SK-N-SH (cell line): ENCODE measurements at regions of chr17 and their contacts with region 1.

Region 1: DNA sequence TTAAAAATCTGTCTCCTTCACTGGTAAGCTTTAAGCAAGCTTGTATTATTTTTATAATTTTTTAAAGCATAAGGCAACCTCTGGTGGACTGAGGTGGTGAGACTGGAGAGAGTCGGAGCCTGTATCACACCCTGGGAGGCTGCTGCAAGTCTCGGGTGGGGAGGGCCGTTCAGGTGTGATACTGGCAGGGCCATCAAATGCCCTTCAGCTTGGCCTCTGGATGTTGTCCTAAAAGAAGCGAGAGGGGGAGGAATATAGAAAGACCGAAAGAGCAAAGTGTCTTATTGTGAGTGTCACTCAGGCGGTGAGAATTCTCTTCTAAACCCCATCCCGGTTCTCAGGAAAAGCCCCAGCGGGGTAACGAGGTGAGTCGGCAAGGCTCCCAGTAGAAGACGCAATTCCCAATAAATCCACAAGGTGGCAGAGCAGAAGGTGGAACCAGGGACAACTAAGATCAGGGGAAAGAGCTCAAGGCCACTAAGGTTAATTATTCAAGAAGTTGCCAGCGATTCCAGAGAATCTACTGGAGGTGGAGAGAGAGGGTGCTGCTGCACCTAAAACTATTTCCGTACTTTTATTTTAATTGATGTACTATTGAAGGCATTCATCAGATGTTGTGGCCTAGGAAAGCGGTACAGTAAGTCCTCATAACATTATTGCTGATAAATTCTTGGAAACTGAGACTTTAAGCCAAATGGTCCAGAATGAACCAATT is 14.1 kb downstream of the C17orf67 start:
- DNase-seq: peak; percentile 87
- H3K4me3 ChIP-seq: no peak overlapping the region; a peak in 1 of 4 replicates
- H3K27ac ChIP-seq: no peak overlapping the region
- H3K4me1 ChIP-seq: peaks cover 5 to 6% of the 10 kb centered on the region in 2 experiments; a peak in 2 of 4 replicates
- H3K27me3 ChIP-seq: no peaks in the 10 kb centered on the region
- CTCF ChIP-seq: peak; percentile 95
- EP300 ChIP-seq: no peak
- RAD21 ChIP-seq: peak; percentile 88

Region 2: DNA sequence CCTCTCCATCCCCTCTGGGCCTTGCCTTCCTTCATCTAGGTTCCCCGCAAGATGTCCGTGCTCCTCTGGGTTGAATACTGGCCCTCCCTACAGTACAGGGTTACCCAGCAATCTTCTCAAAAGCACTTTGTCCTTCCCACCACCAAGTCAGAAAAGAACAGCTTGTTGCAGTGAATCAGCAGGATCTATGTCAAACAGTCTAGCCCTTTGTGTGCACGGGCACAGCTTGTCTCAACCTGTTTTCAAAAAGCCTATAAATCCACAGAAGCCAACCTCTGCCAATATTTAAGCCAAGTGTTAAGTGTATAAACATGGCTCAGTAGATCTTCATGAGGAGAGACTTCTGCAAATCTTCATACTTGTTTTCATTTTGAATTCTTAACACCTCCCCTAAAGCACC is 11.1 kb before region 1 on chr17:
- CTCF ChIA-PET with region 1: interaction called, 35 read pairs
- POLR2A ChIA-PET with region 1: no interaction called
- DNase-seq: no peak
- H3K4me3 ChIP-seq: no peak overlapping the region
- H3K27ac ChIP-seq: no peak overlapping the region
- H3K4me1 ChIP-seq: peaks cover 0 to 2% of the 10 kb centered on the region in 2 experiments; a peak in 1 of 4 replicates
- H3K27me3 ChIP-seq: no peaks in the 10 kb centered on the region
- CTCF ChIP-seq: no peak
- EP300 ChIP-seq: no peak
- RAD21 ChIP-seq: no peak

Region 3: GRCh38 chr17:56860551-56860950 is 41.0 kb after region 1 on chr17:
- CTCF ChIA-PET with region 1: interaction called, 15 read pairs
- POLR2A ChIA-PET with region 1: no interaction called
- DNase-seq: no peak
- H3K4me3 ChIP-seq: no peak overlapping the region
- H3K27ac ChIP-seq: no peak overlapping the region
- H3K4me1 ChIP-seq: no peaks in the 10 kb centered on the region; a peak in 1 of 4 replicates
- H3K27me3 ChIP-seq: no peaks in the 10 kb centered on the region
- CTCF ChIP-seq: no peak
- EP300 ChIP-seq: no peak
- RAD21 ChIP-seq: no peak

Region 4: DNA sequence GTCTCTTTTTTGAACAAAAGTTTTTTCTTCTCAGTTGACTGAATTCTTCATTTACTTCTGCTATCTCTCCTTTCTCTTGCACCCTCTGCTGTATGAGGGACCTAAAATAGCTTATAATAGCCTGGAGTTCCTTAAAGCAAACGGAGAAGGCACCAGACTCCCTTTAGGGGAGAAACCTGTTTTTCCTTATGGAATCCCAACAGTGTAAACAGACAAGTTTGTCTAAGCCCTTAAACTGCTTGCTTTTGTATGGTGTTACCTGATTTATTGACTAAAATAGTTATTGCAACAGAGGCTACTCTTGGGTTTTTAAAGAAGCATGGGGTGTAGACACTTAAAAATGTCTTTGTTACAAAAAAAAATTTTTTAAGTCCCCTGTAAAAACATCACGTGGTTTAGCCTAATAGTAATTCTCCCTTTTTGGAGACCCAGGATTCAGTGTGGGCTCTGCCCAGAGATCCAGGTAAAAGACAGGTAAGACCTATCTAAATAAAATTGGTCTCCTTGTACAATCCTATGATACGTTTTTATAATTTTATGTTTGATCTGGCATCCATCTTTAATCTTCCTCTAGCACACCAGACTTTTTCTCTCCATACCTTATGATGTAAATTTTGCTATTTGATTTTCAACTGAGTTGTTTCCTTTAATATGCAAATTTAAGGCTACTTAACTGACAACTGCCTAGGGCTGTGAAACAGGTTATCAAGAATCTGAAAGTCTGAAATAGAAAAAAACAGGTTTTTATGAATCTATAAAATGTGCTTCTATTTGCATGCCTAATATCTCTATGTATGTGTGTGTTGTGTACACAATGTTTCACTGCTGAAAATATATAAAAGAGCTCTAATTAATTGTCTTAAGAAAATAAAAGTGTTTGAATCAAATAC is 107.4 kb after region 1 on chr17:
- CTCF ChIA-PET with region 1: interaction called, 28 read pairs
- POLR2A ChIA-PET with region 1: no interaction called
- DNase-seq: no peak
- H3K4me3 ChIP-seq: no peak overlapping the region
- H3K27ac ChIP-seq: no peak overlapping the region
- H3K4me1 ChIP-seq: no peaks in the 10 kb centered on the region
- H3K27me3 ChIP-seq: no peaks in the 10 kb centered on the region
- CTCF ChIP-seq: no peak
- EP300 ChIP-seq: no peak
- RAD21 ChIP-seq: no peak

Region 5: GRCh38 chr17:56948491-56948890 is 128.9 kb after region 1 on chr17:
- CTCF ChIA-PET with region 1: interaction called, 251 read pairs
- POLR2A ChIA-PET with region 1: no interaction called
- DNase-seq: no peak
- H3K4me3 ChIP-seq: no peak overlapping the region
- H3K27ac ChIP-seq: no peak overlapping the region
- H3K4me1 ChIP-seq: no peaks in the 10 kb centered on the region
- H3K27me3 ChIP-seq: no peaks in the 10 kb centered on the region
- CTCF ChIP-seq: no peak
- EP300 ChIP-seq: no peak
- RAD21 ChIP-seq: no peak